CD4-positive, alpha-beta memory T cell (primary cell): ENCODE measurements at regions of chr11 and their contacts with region 1.

Region 1: GRCh38 chr11:85694386-85694980 is 8.5 kb upstream of the CCDC89 start:
- DNase-seq: peak in 4 of 5 donors; percentile 40 to 57 (median 45)
- H3K4me3 ChIP-seq: no peak overlapping the region
- H3K4me3 Mint-ChIP-seq: no peak overlapping the region
- H3K27ac ChIP-seq: no peak overlapping the region
- H3K27ac Mint-ChIP-seq: peak overlapping the region in 2 of 7 donors; percentile 7 to 53
- H3K4me1 ChIP-seq: peaks cover 5% of the 10 kb centered on the region
- H3K4me1 Mint-ChIP-seq: peaks cover 8 to 12% (median 9%) of the 10 kb centered on the region in 4 donors
- H3K27me3 ChIP-seq: no peaks in the 10 kb centered on the region
- H3K27me3 Mint-ChIP-seq: peaks cover 0 to 2% of the 10 kb centered on the region in 2 donors

Region 2: DNA sequence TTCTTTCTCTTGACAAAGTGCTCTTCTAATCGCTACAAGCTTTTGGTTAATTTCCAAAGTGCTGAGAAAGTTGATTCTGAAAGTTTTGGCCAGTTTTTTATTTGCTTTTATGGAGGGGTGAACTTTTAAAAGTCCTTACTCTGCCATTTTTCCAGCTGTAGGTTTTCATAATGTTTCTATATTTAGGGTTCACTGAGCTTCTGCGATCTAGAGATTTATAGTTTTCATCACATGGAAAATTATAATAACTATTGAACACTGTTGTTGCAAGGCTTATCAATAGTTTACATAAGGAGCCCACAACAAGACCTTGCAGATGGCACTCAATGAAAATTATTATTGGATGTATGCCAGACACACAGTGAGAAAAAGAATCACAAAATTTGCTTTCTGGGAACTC is 122.4 kb before region 1 on chr11:
- CTCF ChIA-PET with region 1: no interaction called
- POLR2A ChIA-PET with region 1: no interaction called
- intact Hi-C with region 1: no loop called
- DNase-seq: no peak
- H3K4me3 ChIP-seq: no peak overlapping the region
- H3K4me3 Mint-ChIP-seq: no peak overlapping the region
- H3K27ac ChIP-seq: no peak overlapping the region
- H3K27ac Mint-ChIP-seq: no peak overlapping the region
- H3K4me1 ChIP-seq: no peaks in the 10 kb centered on the region
- H3K4me1 Mint-ChIP-seq: peaks cover 0 to 6% (median 4%) of the 10 kb centered on the region in 4 donors
- H3K27me3 ChIP-seq: no peaks in the 10 kb centered on the region
- H3K27me3 Mint-ChIP-seq: peaks cover 10 to 12% of the 10 kb centered on the region in 2 donors

Region 3: GRCh38 chr11:85732965-85733364 is 38.5 kb after region 1 on chr11:
- CTCF ChIA-PET with region 1: no interaction called
- POLR2A ChIA-PET with region 1: no interaction called
- intact Hi-C with region 1: no loop called
- DNase-seq: no peak
- H3K4me3 ChIP-seq: no peak overlapping the region
- H3K4me3 Mint-ChIP-seq: no peak overlapping the region
- H3K27ac ChIP-seq: no peak overlapping the region
- H3K27ac Mint-ChIP-seq: no peak overlapping the region
- H3K4me1 ChIP-seq: peaks cover 10% of the 10 kb centered on the region
- H3K4me1 Mint-ChIP-seq: peaks cover 7 to 34% (median 18%) of the 10 kb centered on the region in 4 donors
- H3K27me3 ChIP-seq: no peaks in the 10 kb centered on the region
- H3K27me3 Mint-ChIP-seq: no peaks in the 10 kb centered on the region

Region 4: DNA sequence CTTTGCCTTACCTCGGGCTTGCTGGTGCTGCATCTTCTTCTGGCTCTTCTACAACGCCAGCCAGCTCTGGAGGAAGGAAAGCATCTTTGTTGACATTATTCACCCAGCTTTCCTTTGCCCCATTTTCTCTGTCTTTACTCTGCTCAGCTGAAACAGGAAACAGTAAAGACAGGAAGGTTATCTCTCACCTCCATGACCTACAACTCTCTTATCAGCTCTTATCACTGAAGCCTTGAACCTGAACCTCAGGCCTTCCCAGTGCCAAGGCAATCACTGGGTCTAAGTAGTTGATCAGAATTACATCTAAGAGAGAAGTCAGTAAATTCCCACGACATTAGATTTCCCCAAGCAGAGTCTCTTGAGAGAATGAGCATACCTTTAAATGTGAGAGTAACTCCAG is 51.1 kb after region 1 on chr11:
- CTCF ChIA-PET with region 1: interaction called, 12 read pairs
- POLR2A ChIA-PET with region 1: no interaction called
- intact Hi-C with region 1: no loop called
- DNase-seq: peak in 2 of 5 donors; percentile 16 to 29
- H3K4me3 ChIP-seq: no peak overlapping the region
- H3K4me3 Mint-ChIP-seq: peak overlapping the region in 7 of 8 donors; percentile 27 to 79 (median 60)
- H3K27ac ChIP-seq: no peak overlapping the region
- H3K27ac Mint-ChIP-seq: peak overlapping the region; percentile 71 to 93 (median 91)
- H3K4me1 ChIP-seq: peaks cover 68% of the 10 kb centered on the region
- H3K4me1 Mint-ChIP-seq: peaks cover 50 to 95% (median 69%) of the 10 kb centered on the region in 4 donors
- H3K27me3 ChIP-seq: no peaks in the 10 kb centered on the region
- H3K27me3 Mint-ChIP-seq: peaks cover 0 to 2% of the 10 kb centered on the region in 2 donors

Region 5: DNA sequence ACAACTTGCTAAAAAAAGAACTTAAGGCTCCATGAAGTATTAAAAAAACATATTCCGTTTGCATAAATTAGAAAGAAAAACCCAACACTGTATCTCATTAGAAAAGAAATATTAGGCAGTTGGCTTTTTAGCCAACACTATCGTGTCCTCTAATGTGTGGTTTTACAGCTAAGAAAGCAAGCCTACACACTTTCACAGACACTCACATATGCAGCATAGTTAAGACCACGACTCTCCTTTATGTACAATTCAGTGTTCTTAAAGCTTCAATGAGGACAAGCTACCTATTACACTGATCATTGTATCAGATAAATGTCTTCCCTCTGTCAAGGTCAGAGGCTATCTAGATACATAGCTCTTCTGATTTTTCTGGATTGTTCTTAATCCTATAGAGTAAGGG is 294.3 kb after region 1 on chr11:
- CTCF ChIA-PET with region 1: no interaction called
- POLR2A ChIA-PET with region 1: no interaction called
- intact Hi-C with region 1: loop called (anchors 10 kb)
- DNase-seq: no peak
- H3K4me3 ChIP-seq: no peak overlapping the region
- H3K4me3 Mint-ChIP-seq: no peak overlapping the region
- H3K27ac ChIP-seq: peak overlapping the region; percentile 6
- H3K27ac Mint-ChIP-seq: peak overlapping the region; percentile 6 to 87 (median 53)
- H3K4me1 ChIP-seq: no peaks in the 10 kb centered on the region
- H3K4me1 Mint-ChIP-seq: peaks cover 10 to 28% (median 17%) of the 10 kb centered on the region in 4 donors
- H3K27me3 ChIP-seq: no peaks in the 10 kb centered on the region
- H3K27me3 Mint-ChIP-seq: no peaks in the 10 kb centered on the region

Region 6: DNA sequence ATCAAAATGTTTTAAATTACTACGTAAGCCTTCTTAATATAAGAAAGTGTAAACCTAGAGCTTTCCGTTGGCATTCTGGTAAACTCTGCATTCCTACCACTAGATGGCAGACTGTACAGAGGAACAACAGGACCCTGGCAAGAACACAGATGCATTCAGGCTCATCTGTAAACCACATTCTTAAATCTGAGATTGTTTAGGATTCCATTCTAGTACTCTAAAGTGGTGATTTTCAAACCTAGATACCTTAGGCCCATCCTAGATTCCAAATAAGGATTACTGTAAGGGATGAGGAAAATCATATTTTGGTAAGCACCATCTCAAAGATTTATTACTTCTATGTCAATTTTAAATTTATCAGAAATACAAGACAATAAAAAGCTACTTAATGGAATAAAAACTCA is 347.5 kb after region 1 on chr11:
- CTCF ChIA-PET with region 1: no interaction called
- POLR2A ChIA-PET with region 1: no interaction called
- intact Hi-C with region 1: loop called (anchors 1 kb)
- DNase-seq: peak; percentile 72 to 76 (median 74)
- H3K4me3 ChIP-seq: no peak overlapping the region
- H3K4me3 Mint-ChIP-seq: peak overlapping the region in 4 of 8 donors; percentile 0 to 35 (median 4)
- H3K27ac ChIP-seq: no peak overlapping the region
- H3K27ac Mint-ChIP-seq: peak overlapping the region; percentile 20 to 84 (median 64)
- H3K4me1 ChIP-seq: peaks cover 58% of the 10 kb centered on the region
- H3K4me1 Mint-ChIP-seq: peaks cover 49 to 73% (median 62%) of the 10 kb centered on the region in 4 donors
- H3K27me3 ChIP-seq: no peaks in the 10 kb centered on the region
- H3K27me3 Mint-ChIP-seq: no peaks in the 10 kb centered on the region